MCF 10A (cell line): ENCODE measurements at regions of chr4 and their contacts with region 1.

Region 1: DNA sequence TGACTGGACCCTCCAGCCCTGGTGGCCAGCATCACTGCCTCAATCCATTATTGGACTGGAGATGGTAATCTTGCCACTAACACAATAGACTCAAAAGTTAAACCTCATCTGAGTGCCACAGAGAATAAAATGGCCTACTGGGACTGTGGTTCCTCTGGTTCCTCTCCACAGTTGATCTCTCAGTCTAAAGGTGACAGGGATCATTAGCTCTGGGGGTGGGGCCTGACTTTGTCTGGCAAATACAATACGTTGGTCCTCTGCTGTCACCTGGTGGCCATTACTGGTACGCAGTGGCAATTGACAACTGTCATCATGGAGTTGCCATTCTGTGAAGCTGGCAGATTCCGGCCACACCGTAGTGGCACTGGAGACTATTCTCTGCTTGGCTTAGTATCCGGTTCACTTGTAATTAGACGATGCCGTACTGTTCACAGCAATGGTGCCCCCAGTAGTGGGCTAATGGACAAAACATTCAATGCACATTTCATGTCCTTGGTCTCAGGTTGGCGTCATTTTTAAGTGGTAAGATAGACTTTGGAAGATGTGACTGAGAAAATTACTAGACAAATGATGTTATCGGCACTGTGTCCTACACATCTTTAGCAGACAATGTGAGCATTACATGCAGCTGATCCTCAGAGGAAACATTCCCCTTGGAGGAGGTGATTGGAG is 6.7 kb downstream of the FGFBP2 start:
- DNase-seq: peak; percentile 89
- H3K4me3 Mint-ChIP-seq: no peak overlapping the region
- H3K27ac Mint-ChIP-seq: no peak overlapping the region
- H3K4me1 Mint-ChIP-seq: peaks cover 10% of the 10 kb centered on the region
- H3K27me3 Mint-ChIP-seq: no peaks in the 10 kb centered on the region
- CTCF ChIP-seq: peak; percentile 92

Region 2: GRCh38 chr4:15729910-15730533 is 226.3 kb before region 1 on chr4:
- CTCF ChIA-PET with region 1: interaction called, 7 read pairs
- POLR2A ChIA-PET with region 1: no interaction called
- intact Hi-C with region 1: loop called (anchors 1 kb)
- DNase-seq: peak; percentile 67
- H3K4me3 Mint-ChIP-seq: no peak overlapping the region
- H3K27ac Mint-ChIP-seq: no peak overlapping the region
- H3K4me1 Mint-ChIP-seq: no peaks in the 10 kb centered on the region
- H3K27me3 Mint-ChIP-seq: peaks cover 17% of the 10 kb centered on the region
- CTCF ChIP-seq: peak; percentile 65

Region 3: DNA sequence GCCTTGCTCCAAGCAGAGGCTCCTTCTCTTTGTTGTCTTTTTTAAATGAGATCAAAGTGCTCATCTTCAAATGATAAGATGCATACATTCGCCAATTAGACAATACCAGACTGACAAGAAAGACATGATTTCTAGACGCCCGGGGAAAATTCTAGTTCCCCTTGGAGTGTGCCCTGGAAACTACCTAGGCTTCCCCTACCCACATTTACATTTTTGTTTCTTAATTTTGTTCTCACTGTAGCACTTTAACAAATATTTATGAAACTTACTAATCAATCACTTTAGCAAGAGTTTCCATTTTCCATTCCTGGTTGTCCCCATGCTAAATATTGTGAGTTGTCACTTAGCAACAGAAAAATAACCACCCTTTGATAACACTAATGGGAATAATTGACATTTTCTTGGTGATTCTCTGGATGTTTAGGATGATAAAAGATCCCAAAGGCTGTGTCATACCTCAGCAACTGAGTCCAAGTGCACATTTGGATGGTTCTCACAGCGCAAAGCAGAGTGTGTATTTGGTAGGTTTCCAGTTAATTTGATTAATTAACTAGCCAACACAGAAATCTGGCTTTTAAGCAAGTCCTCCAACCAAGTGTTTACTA is 87.4 kb before region 1 on chr4:
- CTCF ChIA-PET with region 1: interaction called, 12 read pairs
- POLR2A ChIA-PET with region 1: no interaction called
- intact Hi-C with region 1: no loop called
- DNase-seq: no peak
- H3K4me3 Mint-ChIP-seq: no peak overlapping the region
- H3K27ac Mint-ChIP-seq: no peak overlapping the region
- H3K4me1 Mint-ChIP-seq: no peaks in the 10 kb centered on the region
- H3K27me3 Mint-ChIP-seq: no peaks in the 10 kb centered on the region
- CTCF ChIP-seq: no peak

Region 4: DNA sequence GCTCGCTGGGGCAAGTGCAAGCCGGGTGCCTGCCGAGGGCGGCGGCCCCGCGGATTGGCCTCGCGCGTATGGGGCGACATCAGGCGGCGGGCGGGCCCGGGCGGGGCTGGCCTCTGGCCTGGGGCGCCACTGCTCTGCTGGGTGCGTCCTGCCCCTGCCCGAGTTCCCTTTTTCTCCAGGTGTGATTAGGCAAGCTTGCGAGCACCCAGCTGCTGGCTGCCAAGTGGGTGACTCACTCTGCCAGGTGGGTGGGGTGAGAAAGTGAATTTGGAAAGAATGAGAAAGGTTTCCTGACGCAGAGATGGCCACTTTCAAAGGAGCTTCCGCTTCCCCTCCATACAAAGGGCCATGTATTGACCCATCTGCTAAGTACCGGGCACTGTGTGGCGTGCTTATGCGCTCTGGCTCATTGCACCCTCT is 50.3 kb before region 1 on chr4:
- CTCF ChIA-PET with region 1: interaction called, 27 read pairs
- POLR2A ChIA-PET with region 1: no interaction called
- intact Hi-C with region 1: no loop called
- DNase-seq: peak; percentile 99
- H3K4me3 Mint-ChIP-seq: peak overlapping the region; percentile 52
- H3K27ac Mint-ChIP-seq: peak overlapping the region; percentile 33
- H3K4me1 Mint-ChIP-seq: peaks cover 7% of the 10 kb centered on the region
- H3K27me3 Mint-ChIP-seq: no peaks in the 10 kb centered on the region
- CTCF ChIP-seq: no peak

Region 5: DNA sequence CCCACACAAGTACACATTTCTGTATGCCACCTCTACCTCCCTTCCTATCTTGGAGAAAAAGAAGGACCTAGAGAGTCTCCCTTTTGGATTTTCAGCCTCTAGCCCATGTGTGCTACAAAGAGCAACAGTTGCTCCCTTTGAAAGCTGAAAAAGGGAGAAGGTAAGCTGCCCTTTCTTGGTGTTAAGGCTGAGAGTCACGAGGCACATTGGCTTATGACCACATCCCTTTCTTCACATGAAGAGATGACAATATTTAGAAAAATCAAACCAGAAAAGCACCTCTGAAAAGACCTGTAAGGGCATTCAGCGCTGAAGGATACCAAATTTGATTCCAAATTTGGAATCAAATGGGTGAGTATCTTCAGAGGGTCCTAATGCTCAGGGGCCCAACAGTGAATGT is 11.4 kb before region 1 on chr4:
- CTCF ChIA-PET with region 1: interaction called, 15 read pairs
- POLR2A ChIA-PET with region 1: no interaction called
- intact Hi-C with region 1: no loop called
- DNase-seq: no peak
- H3K4me3 Mint-ChIP-seq: no peak overlapping the region
- H3K27ac Mint-ChIP-seq: no peak overlapping the region
- H3K4me1 Mint-ChIP-seq: peaks cover 20% of the 10 kb centered on the region
- H3K27me3 Mint-ChIP-seq: no peaks in the 10 kb centered on the region
- CTCF ChIP-seq: no peak

Region 6: DNA sequence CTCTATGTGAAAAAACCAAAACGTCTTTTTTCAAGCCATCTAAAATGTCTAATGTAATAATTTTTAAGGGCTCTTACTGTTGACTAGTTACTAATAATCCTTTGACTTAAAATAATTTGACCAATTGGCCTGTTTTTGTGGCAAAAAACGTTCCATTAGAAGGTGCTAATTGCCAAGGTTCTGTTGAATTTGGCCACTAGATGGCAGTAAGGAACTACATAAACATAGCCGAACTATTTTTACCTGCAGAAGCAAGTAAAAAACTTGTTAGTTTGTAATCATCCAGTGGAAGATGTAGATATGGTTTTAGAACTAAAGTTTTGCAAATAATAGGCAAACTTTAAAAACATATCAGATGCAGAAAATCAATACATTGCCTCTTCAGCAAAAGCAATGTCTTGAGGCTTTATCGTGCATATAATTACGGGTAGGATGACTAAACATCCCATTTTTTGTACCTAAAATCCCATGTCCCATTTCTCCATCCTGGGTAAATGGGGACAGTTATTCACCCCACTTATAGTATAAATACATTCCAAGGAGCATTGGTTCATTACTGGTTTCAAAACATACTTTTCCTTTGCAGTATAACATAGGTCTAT is 69.9 kb after region 1 on chr4:
- CTCF ChIA-PET with region 1: no interaction called
- POLR2A ChIA-PET with region 1: no interaction called
- intact Hi-C with region 1: no loop called
- DNase-seq: peak; percentile 65
- H3K4me3 Mint-ChIP-seq: no peak overlapping the region
- H3K27ac Mint-ChIP-seq: no peak overlapping the region
- H3K4me1 Mint-ChIP-seq: peaks cover 6% of the 10 kb centered on the region
- H3K27me3 Mint-ChIP-seq: no peaks in the 10 kb centered on the region
- CTCF ChIP-seq: peak; percentile 72

Region 7: GRCh38 chr4:16264798-16265197 is 308.5 kb after region 1 on chr4:
- CTCF ChIA-PET with region 1: interaction called, 3 read pairs
- POLR2A ChIA-PET with region 1: no interaction called
- intact Hi-C with region 1: loop called (anchors 10 kb)
- DNase-seq: peak; percentile 51
- H3K4me3 Mint-ChIP-seq: no peak overlapping the region
- H3K27ac Mint-ChIP-seq: no peak overlapping the region
- H3K4me1 Mint-ChIP-seq: no peaks in the 10 kb centered on the region
- H3K27me3 Mint-ChIP-seq: no peaks in the 10 kb centered on the region
- CTCF ChIP-seq: peak; percentile 37